ENCODE measurements at regions of chr6 and their contacts with region 1.

Region 1: DNA sequence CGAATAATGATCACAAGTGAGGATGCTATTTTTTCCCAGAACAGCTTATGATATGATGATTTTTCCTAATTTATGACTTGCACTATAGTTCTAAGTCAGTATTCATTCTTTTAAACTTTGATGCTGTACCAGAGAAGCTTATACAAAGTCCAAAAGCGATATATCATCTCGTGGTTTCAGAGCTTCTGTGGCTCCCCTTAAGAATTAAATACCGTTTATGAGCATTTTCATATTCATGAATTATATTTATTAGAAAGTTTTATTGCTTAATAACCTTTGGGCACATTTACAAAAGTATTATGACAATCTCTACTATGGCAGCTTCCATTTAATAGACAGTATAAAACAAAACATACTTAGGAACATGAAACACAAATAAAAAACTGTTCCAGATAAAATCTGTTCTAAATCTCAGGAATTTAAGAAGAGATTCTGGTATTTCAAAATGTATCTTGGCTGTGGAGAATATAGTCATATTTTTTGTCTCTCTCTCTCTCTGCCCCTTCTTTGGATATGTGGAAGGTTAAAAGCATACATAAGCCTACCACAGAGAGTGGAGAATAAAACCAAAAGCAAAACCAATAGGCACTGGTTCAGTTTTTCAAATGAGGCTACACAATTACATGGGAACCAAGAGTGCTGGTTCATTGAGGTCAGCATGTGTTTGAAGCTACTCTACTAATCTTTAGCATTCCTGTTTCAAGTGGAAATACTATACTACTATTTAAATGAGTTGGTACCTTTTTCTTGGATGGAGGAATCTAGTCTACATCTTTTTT is 884.5 kb upstream of the GJE1 start:
- DNase-seq: no peak
- H3K4me3 ChIP-seq: no peak overlapping the region
- H3K27ac ChIP-seq: no peak overlapping the region
- H3K4me1 ChIP-seq: no peaks in the 10 kb centered on the region
- H3K27me3 ChIP-seq: no peaks in the 10 kb centered on the region
- CTCF ChIP-seq: no peak
- POLR2A ChIP-seq: no peak

Region 2: GRCh38 chr6:140979642-140980091 is 268.5 kb before region 1 on chr6:
- intact Hi-C with region 1: loop called (anchors 5 kb)
- DNase-seq: peak; percentile 51
- H3K4me3 ChIP-seq: no peak overlapping the region
- H3K27ac ChIP-seq: peak overlapping the region in 1 of 2 donors; percentile 13
- H3K4me1 ChIP-seq: no peaks in the 10 kb centered on the region
- H3K27me3 ChIP-seq: no peaks in the 10 kb centered on the region
- CTCF ChIP-seq: no peak
- POLR2A ChIP-seq: no peak

Region 3: DNA sequence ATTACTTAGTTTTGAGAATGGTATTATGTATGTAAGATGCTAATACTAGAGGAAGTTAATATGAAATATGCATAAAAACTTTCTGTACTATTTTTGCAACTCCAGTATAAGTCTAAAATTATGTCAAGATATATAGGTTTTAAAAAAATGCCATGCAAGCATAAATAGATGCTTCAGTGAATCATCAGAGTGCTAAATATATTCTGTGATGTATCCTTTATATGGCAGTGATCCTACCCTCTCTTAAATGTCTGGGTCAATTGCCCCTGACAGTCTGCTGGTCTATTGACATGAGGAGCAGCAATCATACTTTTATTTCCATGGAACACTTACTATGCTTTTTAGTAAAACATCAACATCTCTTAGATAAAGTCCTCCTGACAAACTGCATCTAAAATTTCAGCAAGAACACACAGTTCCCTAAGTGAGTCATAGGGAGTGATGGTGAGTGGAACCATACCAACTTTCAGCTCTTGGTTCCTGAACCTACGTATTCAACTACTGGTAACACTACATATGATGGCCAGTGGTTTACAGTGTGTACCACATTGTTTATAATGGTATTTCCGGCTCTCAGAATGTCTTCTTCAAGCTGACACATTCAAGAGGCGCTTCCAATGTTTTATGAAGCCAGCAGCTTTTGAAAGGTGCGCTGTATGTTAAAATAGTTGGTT is 44.2 kb before region 1 on chr6:
- intact Hi-C with region 1: loop called (anchors 5 kb)
- DNase-seq: no peak
- H3K4me3 ChIP-seq: no peak overlapping the region
- H3K27ac ChIP-seq: no peak overlapping the region
- H3K4me1 ChIP-seq: no peaks in the 10 kb centered on the region
- H3K27me3 ChIP-seq: no peaks in the 10 kb centered on the region
- CTCF ChIP-seq: no peak
- POLR2A ChIP-seq: no peak

Region 4: DNA sequence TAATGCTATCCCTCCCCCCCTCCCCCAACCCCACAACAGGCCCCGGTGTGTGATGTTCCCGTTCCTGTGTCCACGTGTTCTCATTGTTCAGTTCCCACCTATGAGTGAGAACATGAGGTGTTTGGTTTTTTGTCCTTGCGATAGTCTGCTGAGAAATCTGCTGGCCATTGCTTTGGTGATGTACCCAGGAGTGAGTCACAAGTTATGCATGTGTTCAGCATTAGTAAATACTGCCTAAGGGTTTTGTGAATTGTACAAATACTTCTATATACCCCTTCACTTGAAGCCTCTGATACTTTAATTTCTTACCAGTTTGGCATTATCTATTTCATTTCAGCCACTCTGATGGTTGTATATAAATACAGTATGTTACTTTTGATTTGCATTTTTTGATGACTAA is 173.2 kb after region 1 on chr6:
- intact Hi-C with region 1: no loop called
- DNase-seq: no peak
- H3K4me3 ChIP-seq: no peak overlapping the region
- H3K27ac ChIP-seq: no peak overlapping the region
- H3K4me1 ChIP-seq: no peaks in the 10 kb centered on the region
- H3K27me3 ChIP-seq: no peaks in the 10 kb centered on the region
- CTCF ChIP-seq: no peak
- POLR2A ChIP-seq: no peak

Measured in prostate gland (tissue), 2 donors.